Right ventricle myocardium inferior (tissue), 1 donor: ENCODE measurements at regions of chr4 and their contacts with region 1.

Region 1: GRCh38 chr4:141158219-141158618 is 24.9 kb upstream of the RNF150 start:
- DNase-seq: no peak
- ATAC-seq: no peak

Region 2: GRCh38 chr4:140726776-140727500 is 431.3 kb before region 1 on chr4:
- intact Hi-C with region 1: no loop called
- DNase-seq: no peak
- ATAC-seq: no peak

Region 3: GRCh38 chr4:141133146-141133998 is 24.8 kb before region 1 on chr4 and contains the start of gene RNF150:
- intact Hi-C with region 1: no loop called
- DNase-seq: peak; percentile 86
- ATAC-seq: peak; percentile 85
- total RNA-seq, gene RNF150: 56.1 TPM

Region 4: GRCh38 chr4:141220655-141221605 is 62.7 kb after region 1 on chr4 and contains the start of gene ZNF330:
- intact Hi-C with region 1: loop called (anchors 5 kb)
- DNase-seq: peak; percentile 95
- ATAC-seq: peak; percentile 97
- total RNA-seq, gene ZNF330: 156 TPM

Region 5: GRCh38 chr4:141307241-141307689 is 149.0 kb after region 1 on chr4:
- intact Hi-C with region 1: loop called (anchors 10 kb)
- DNase-seq: peak; percentile 67
- ATAC-seq: peak; percentile 93